Naive thymus-derived CD4-positive, alpha-beta T cell (primary cell): ENCODE measurements at regions of chr6 and their contacts with region 1.

Region 1: DNA sequence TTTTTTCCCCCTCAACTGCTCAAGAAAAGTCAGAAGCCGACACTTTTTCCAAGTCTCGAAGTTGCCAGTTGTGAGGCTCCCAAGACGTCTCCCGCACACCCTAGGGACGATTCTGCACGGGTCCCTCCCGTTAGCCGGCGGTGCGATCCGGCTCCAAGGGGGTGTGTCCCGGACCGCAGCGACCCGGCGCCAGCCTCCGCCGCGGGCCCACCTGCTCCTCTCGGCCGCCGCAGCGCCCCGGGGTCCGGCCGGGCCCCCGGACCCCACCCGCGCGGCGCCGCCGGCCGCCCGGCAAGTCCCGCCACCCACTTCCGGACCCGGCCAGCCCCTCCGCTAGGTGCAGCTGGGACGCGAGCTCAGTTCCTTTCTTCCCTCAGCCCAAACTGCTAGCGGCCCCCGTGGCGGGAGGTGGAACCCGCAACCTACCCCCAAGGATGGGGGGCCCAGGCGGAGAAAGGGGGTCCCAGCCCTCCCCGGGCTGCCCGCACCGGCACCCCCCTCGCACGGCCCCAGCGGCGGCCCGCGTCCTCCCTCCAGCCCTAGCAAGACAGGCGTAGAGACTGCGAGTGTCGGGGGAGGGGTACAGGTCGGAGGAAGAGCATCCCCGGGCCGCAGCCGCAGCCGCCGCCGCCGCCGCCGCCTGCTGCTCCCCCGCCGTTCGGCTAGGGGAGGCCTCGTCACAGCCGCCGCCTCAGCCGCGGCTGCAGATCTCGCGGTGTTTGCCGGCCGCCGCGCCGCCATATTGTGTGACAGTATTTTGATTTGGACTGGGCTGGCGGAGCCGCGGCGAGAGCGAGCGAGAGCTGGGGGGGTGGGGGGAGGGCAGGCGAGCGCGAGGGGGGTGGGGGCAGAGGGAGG is 485 bp upstream of the TAB2 start:
- DNase-seq: peak; percentile 83 to 91 (median 88)
- ATAC-seq: peak; percentile 86
- H3K4me3 ChIP-seq: peak overlapping the region; percentile 73
- H3K4me3 Mint-ChIP-seq: peak overlapping the region; percentile 74 to 99 (median 86)
- H3K27ac ChIP-seq: peak overlapping the region; percentile 95
- H3K27ac Mint-ChIP-seq: peak overlapping the region; percentile 81 to 92 (median 86)
- H3K4me1 ChIP-seq: peaks cover 13 to 26% of the 10 kb centered on the region in 2 donors
- H3K4me1 Mint-ChIP-seq: peaks cover 23 to 56% (median 42%) of the 10 kb centered on the region in 7 donors
- H3K27me3 ChIP-seq: no peaks in the 10 kb centered on the region
- H3K27me3 Mint-ChIP-seq: no peaks in the 10 kb centered on the region

Region 2: GRCh38 chr6:149082286-149082707 is 234.7 kb before region 1 on chr6:
- CTCF ChIA-PET with region 1: interaction called, 5 read pairs
- POLR2A ChIA-PET with region 1: interaction called, 3 read pairs
- intact Hi-C with region 1: loop called (anchors 1 kb)
- DNase-seq: peak; percentile 59 to 84 (median 76)
- ATAC-seq: peak; percentile 97
- H3K4me3 ChIP-seq: no peak overlapping the region
- H3K4me3 Mint-ChIP-seq: peak overlapping the region in 2 of 10 donors; percentile 18 to 72
- H3K27ac ChIP-seq: no peak overlapping the region
- H3K27ac Mint-ChIP-seq: peak overlapping the region in 5 of 9 donors; percentile 4 to 90 (median 52)
- H3K4me1 ChIP-seq: peaks cover 16 to 25% of the 10 kb centered on the region in 2 donors
- H3K4me1 Mint-ChIP-seq: peaks cover 10 to 88% (median 39%) of the 10 kb centered on the region in 7 donors
- H3K27me3 ChIP-seq: no peaks in the 10 kb centered on the region
- H3K27me3 Mint-ChIP-seq: no peaks in the 10 kb centered on the region

Region 3: GRCh38 chr6:149211046-149211571 is 105.9 kb before region 1 on chr6:
- CTCF ChIA-PET with region 1: no interaction called
- POLR2A ChIA-PET with region 1: no interaction called
- intact Hi-C with region 1: loop called in 1 of 2 experiments (anchors 1 kb)
- DNase-seq: peak in 1 of 9 donors; percentile 34
- ATAC-seq: peak; percentile 71
- H3K4me3 ChIP-seq: no peak overlapping the region
- H3K4me3 Mint-ChIP-seq: peak overlapping the region in 8 of 10 donors; percentile 15 to 70 (median 46)
- H3K27ac ChIP-seq: no peak overlapping the region
- H3K27ac Mint-ChIP-seq: peak overlapping the region in 5 of 9 donors; percentile 17 to 91 (median 59)
- H3K4me1 ChIP-seq: peaks cover 26 to 34% of the 10 kb centered on the region in 2 donors
- H3K4me1 Mint-ChIP-seq: peaks cover 6 to 28% (median 14%) of the 10 kb centered on the region in 7 donors
- H3K27me3 ChIP-seq: no peaks in the 10 kb centered on the region
- H3K27me3 Mint-ChIP-seq: no peaks in the 10 kb centered on the region

Region 4: GRCh38 chr6:149284904-149285303 is 32.1 kb before region 1 on chr6:
- CTCF ChIA-PET with region 1: interaction called, 3 read pairs
- POLR2A ChIA-PET with region 1: interaction called, 4 read pairs
- intact Hi-C with region 1: loop called in 1 of 2 experiments (anchors 2 kb)
- DNase-seq: no peak
- ATAC-seq: no peak
- H3K4me3 ChIP-seq: no peak overlapping the region
- H3K4me3 Mint-ChIP-seq: peak overlapping the region in 1 of 10 donors; percentile 54
- H3K27ac ChIP-seq: no peak overlapping the region
- H3K27ac Mint-ChIP-seq: peak overlapping the region in 1 of 9 donors; percentile 63
- H3K4me1 ChIP-seq: no peaks in the 10 kb centered on the region
- H3K4me1 Mint-ChIP-seq: peaks cover 0 to 37% (median 2%) of the 10 kb centered on the region in 7 donors
- H3K27me3 ChIP-seq: no peaks in the 10 kb centered on the region
- H3K27me3 Mint-ChIP-seq: no peaks in the 10 kb centered on the region

Region 5: GRCh38 chr6:149405823-149406765 is 89.1 kb after region 1 on chr6:
- CTCF ChIA-PET with region 1: no interaction called
- POLR2A ChIA-PET with region 1: no interaction called
- intact Hi-C with region 1: no loop called
- DNase-seq: no peak
- ATAC-seq: peak; percentile 49
- H3K4me3 ChIP-seq: no peak overlapping the region
- H3K4me3 Mint-ChIP-seq: no peak overlapping the region
- H3K27ac ChIP-seq: no peak overlapping the region
- H3K27ac Mint-ChIP-seq: peak overlapping the region in 7 of 9 donors; percentile 41 to 79 (median 48)
- H3K4me1 ChIP-seq: no peaks in the 10 kb centered on the region
- H3K4me1 Mint-ChIP-seq: peaks cover 0 to 51% (median 9%) of the 10 kb centered on the region in 7 donors
- H3K27me3 ChIP-seq: no peaks in the 10 kb centered on the region
- H3K27me3 Mint-ChIP-seq: no peaks in the 10 kb centered on the region

Region 6: DNA sequence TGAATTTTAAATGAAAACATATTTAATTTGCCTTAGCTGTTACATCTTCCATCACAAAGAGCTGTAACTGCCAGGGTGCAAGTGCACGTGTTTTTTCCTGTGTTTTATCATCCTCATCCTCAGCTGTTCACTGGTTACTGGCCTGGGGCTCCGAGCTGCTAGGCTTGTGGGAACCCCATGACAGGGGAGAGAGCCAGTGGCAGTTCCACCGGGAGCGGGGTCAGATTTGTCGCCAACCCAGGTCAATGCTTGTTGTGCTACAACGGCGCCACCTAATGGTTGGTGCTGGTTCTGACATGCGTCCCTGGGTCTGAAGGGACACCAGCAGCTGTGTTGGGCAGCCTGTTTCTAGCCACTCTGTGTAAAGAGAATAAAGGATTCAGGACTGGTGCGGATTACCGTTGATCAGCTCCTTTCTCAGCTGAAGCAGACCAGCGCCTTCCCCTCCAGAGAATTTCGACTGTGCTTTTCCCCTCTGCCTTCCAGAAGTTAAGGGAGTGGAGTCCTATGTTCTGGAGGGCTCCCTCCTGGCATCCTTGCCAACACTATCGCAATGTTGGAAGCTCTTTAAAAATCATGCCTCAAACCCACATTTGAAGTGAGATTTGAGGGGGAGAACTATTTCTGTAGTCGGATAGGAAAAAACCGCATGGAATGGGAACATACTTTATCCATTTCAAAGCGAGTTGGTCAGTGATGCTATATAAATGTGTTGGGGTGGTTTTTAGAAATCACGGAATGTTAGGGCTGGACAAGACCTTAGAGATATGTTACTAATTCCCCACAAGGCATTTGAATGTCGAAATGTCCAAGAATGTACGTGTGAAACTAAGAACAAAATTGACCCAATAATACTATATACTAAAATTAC is 115.1 kb after region 1 on chr6:
- CTCF ChIA-PET with region 1: interaction called, 8 read pairs
- POLR2A ChIA-PET with region 1: interaction called, 4 read pairs
- intact Hi-C with region 1: loop called in 1 of 2 experiments (anchors 2 kb)
- DNase-seq: peak; percentile 63 to 89 (median 78)
- ATAC-seq: peak; percentile 92
- H3K4me3 ChIP-seq: peak overlapping the region; percentile 44
- H3K4me3 Mint-ChIP-seq: peak overlapping the region; percentile 35 to 84 (median 72)
- H3K27ac ChIP-seq: no peak overlapping the region
- H3K27ac Mint-ChIP-seq: peak overlapping the region in 5 of 9 donors; percentile 25 to 86 (median 67)
- H3K4me1 ChIP-seq: no peaks in the 10 kb centered on the region
- H3K4me1 Mint-ChIP-seq: peaks cover 0 to 20% (median 4%) of the 10 kb centered on the region in 7 donors
- H3K27me3 ChIP-seq: no peaks in the 10 kb centered on the region
- H3K27me3 Mint-ChIP-seq: no peaks in the 10 kb centered on the region

Region 7: GRCh38 chr6:149717588-149718458 is 400.8 kb after region 1 on chr6 and contains the start of gene LATS1:
- CTCF ChIA-PET with region 1: no interaction called
- POLR2A ChIA-PET with region 1: no interaction called
- intact Hi-C with region 1: loop called in 1 of 2 experiments (anchors 1 kb)
- DNase-seq: peak; percentile 76 to 96 (median 91)
- ATAC-seq: peak; percentile 96
- H3K4me3 ChIP-seq: peak within 1 kb of the TSS; percentile 72
- H3K4me3 Mint-ChIP-seq: peak within 1 kb of the TSS; percentile 89 to 99 (median 94)
- H3K27ac ChIP-seq: peak within 1 kb of the TSS; percentile 97
- H3K27ac Mint-ChIP-seq: peak within 1 kb of the TSS; percentile 95 to 99 (median 97)
- H3K4me1 ChIP-seq: peaks cover 11 to 19% of the 10 kb centered on the region in 2 donors
- H3K4me1 Mint-ChIP-seq: peaks cover 18 to 51% (median 44%) of the 10 kb centered on the region in 7 donors
- H3K27me3 ChIP-seq: no peaks in the 10 kb centered on the region
- H3K27me3 Mint-ChIP-seq: no peaks in the 10 kb centered on the region
- total RNA-seq, gene LATS1: 33.3 to 49.5 (median 44.6) TPM